Gastrocnemius medialis (tissue), 4 donors: ENCODE measurements at regions of chrX and their contacts with region 1.

Region 1: DNA sequence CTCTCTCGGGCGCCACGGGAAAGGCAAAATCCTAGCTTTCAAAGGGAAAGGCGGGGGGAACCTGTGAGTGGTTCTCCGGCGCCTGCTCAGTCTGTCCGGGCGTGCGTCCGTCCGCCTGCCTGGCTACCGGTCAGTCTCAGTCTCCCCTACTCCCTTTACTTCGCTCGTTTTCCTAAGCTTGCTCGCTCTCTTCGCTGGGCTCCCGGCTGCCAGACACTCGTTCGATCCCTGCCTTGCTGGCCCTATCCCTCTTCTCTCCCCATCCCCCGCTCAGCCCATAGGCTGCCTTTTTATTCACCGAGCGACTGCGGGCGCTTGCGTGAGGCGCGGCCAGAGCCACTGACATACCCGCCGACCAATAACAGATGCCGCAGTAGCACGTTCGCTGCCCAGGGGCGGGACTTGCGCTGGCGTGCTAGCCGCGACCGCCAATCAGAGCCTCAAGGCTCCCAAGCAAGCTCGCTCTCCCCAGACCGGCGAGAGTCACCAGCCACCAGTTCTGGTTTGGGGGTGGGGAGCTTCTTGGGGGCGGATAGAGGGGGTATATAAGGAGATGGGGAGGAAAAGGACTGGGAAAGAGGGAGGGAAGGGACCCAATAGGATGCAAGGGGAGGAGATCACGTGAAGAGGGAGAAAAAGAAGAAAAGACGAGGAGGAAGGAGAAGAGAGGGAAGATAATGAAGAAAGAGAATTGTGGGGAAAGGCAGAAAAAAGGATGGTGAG is 30.0 kb downstream of the ARHGEF9 start:
- DNase-seq: peak; percentile 87 to 91
- ATAC-seq: peak; percentile 94 to 96
- H3K4me3 ChIP-seq: peak overlapping the region; percentile 66 to 79 (median 75)
- H3K27ac ChIP-seq: peak overlapping the region; percentile 87 to 94 (median 90)
- H3K4me1 ChIP-seq: peaks cover 9 to 15% of the 10 kb centered on the region in 2 donors
- H3K27me3 ChIP-seq: peaks cover 0 to 2% (median 0%) of the 10 kb centered on the region in 3 donors
- CTCF ChIP-seq: no peak
- POLR2A ChIP-seq: peak; percentile 64 to 81

Region 2: GRCh38 chrX:63350941-63351616 is 403.9 kb before region 1 on chrX and contains the start of gene SPIN4:
- in situ Hi-C with region 1: no loop called
- intact Hi-C with region 1: loop called (anchors 5 kb)
- DNase-seq: peak; percentile 44 to 57
- ATAC-seq: peak; percentile 77 to 87
- H3K4me3 ChIP-seq: peak within 1 kb of the TSS; percentile 58 to 78 (median 63)
- H3K27ac ChIP-seq: peak within 1 kb of the TSS; percentile 42 to 54 (median 50)
- H3K4me1 ChIP-seq: no peaks in the 10 kb centered on the region
- H3K27me3 ChIP-seq: no peaks in the 10 kb centered on the region
- CTCF ChIP-seq: no peak
- POLR2A ChIP-seq: peak; percentile 18 to 39
- total RNA-seq, gene SPIN4: 0.24 to 1.2 (median 0.52) TPM in 3 of 4 donors, not detected in the other

Region 3: GRCh38 chrX:63560601-63561218 is 194.3 kb before region 1 on chrX:
- in situ Hi-C with region 1: loop called in 1 of 4 experiments (anchors 25 kb)
- intact Hi-C with region 1: loop called (anchors 10 kb)
- DNase-seq: peak; percentile 34 to 61
- ATAC-seq: peak; percentile 99
- H3K4me3 ChIP-seq: peak overlapping the region; percentile 59 to 78 (median 72)
- H3K27ac ChIP-seq: peak overlapping the region; percentile 66 to 88 (median 82)
- H3K4me1 ChIP-seq: peaks cover 0 to 6% of the 10 kb centered on the region in 2 donors
- H3K27me3 ChIP-seq: no peaks in the 10 kb centered on the region
- CTCF ChIP-seq: peak in 1 of 5 experiments; percentile 15
- POLR2A ChIP-seq: peak; percentile 14 to 34